ENCODE measurements at regions of chr19 and their contacts with region 1.

Region 1: GRCh38 chr19:1020868-1021425 is at the start of gene TMEM259:
- DNase-seq: peak; percentile 99
- total RNA-seq, gene TMEM259: 96.5 to 99.8 TPM

Region 2: GRCh38 chr19:913080-913748 is 107.7 kb before region 1 on chr19 and contains the start of gene R3HDM4:
- intact Hi-C with region 1: no loop called
- DNase-seq: peak; percentile 95
- total RNA-seq, gene R3HDM4: 36.2 to 41.5 TPM

Region 3: DNA sequence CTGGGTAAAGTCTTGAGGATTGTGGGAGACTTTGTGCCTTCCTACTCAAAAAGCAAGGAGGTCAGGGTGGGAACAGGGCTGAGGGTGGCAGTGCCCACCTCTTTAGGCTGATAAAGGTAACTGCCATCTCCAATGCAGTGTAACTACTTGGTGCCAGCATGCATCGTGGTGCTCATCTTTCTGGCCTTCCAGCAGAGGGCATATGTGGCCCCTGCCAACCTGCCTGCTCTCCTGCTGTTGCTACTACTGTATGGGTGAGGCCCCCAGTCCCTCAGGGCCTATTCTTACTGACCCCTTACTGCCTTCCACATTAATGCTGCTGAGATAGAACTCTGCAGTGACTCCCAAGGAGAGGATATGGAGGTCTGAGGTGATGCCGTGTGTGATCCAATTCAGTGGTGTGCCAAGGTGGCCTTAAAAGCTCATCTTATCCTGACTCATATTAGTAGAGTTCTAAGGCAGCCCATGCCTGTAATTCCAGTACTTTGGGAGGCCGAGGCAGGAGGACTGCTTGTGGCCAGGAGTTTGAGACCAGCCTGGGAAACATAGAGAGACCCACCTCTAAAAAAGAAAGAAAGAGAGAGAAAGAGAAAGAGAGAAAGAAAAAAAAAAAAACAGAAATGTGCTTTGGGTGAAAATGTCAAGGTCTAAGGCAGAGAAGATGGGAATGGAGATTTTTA is 36.4 kb after region 1 on chr19:
- intact Hi-C with region 1: no loop called
- DNase-seq: no peak

Region 4: DNA sequence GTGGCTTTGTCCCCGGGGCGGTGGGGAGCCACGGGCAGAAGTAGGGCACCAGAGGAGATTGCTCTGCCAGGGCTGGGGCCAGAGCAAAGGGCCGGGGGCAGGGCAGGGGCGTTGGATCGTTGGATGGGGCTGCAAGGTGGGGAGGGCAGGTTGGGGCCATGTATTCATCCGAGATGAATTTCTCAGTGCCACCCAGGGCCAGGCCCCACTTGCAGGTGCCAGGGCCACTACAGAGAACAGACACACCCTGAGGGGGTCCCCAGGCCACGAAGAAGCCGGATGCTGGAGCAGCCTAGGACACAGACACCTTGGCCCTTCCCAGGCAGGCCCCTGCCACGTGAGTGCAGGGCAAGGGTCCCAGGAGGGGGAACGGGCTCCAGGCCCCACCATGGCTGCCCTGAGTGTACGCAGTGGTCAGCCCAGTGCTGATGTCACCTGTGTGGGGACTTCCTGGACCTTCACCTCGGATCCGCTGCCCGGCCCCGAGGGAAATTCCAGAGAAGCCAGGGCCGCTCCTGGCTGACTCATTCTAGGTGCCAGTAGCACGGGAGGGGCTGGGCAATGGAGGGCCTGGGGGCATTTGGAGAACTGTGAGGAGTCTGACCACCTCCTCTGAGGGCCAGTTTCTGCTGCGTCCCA is 162.7 kb after region 1 on chr19:
- intact Hi-C with region 1: loop called in 1 of 2 experiments (anchors 10 kb)
- DNase-seq: no peak

Region 5: GRCh38 chr19:1812469-1813196 is 791.7 kb after region 1 on chr19:
- intact Hi-C with region 1: no loop called
- DNase-seq: peak; percentile 98

Measured in posterior vena cava (tissue), 2 donors.